ENCODE measurements at regions of chr1 and their contacts with region 1.

Region 1: DNA sequence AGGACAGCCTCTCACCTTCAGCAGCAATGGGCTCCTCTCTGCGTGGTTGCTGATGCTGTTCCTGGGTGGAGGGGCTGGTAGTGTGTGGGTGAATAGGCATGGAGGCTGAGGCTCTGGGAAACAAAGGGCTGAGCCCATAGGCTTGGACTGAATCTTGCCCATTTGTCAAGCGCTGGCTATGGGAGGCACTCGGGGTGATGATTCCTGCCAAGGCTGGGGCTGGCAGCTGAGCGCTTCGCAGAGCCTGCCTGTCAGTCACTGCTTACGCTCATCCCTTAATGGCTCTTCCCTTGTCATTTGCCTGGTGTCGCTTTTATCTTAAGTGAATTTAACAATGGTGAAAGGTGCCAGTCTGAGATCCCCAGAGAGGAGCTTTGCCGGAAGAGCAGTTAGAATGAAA is 353.3 kb downstream of the PBX1 start:
- DNase-seq: no peak
- ATAC-seq: no peak
- H3K4me3 ChIP-seq: no peak overlapping the region
- H3K27ac ChIP-seq: no peak overlapping the region
- H3K4me1 ChIP-seq: no peaks in the 10 kb centered on the region
- H3K27me3 ChIP-seq: no peaks in the 10 kb centered on the region; the same call in 1 of the 2 replicates
- CTCF ChIP-seq: no peak

Region 2: GRCh38 chr1:164891612-164892011 is 20.7 kb before region 1 on chr1:
- CTCF ChIA-PET with region 1: no interaction called
- POLR2A ChIA-PET with region 1: interaction called, 11 read pairs
- in situ Hi-C with region 1: no loop called
- intact Hi-C with region 1: no loop called
- DNase-seq: no peak
- ATAC-seq: no peak
- H3K4me3 ChIP-seq: no peak overlapping the region
- H3K27ac ChIP-seq: no peak overlapping the region
- H3K4me1 ChIP-seq: no peaks in the 10 kb centered on the region
- H3K27me3 ChIP-seq: no peaks in the 10 kb centered on the region
- CTCF ChIP-seq: peak; percentile 10; the same call in 1 of the 2 replicates

Measured in Panc1 (cell line).